BJ (cell line): ENCODE measurements at regions of chr3 and their contacts with region 1.

Region 1: DNA sequence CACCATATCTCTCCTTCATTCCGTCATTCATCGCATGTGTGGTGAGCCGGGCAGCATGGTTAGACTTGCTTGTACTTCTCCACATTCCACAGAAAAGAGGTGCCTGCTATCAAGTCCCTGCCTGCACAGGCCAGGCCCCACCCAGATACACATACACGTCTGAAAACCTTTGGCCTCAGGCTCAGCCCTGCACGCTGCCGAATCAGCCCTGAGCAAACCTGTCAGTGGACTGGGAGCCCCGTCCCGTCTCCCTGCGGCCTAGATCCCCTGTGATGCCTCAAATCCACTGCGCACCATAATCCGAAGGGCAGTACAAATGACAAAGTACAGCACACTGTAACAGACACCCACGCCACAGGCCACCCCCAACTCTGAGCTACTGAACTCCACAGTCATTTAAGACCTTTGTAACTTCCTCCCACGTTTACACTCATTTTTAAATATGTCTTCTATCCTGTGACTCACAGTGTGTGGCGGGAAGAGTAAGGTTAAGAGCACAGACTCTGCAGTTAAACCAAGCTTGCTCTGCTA is 67.1 kb downstream of the MB21D2 start:
- DNase-seq: no peak
- H3K4me3 ChIP-seq: no peak overlapping the region
- H3K27me3 ChIP-seq: no peaks in the 10 kb centered on the region
- CTCF ChIP-seq: no peak

Region 2: GRCh38 chr3:192917404-192918274 is 67.1 kb after region 1 on chr3 and contains the start of gene MB21D2:
- CTCF ChIA-PET with region 1: no interaction called
- POLR2A ChIA-PET with region 1: interaction called, 15 read pairs
- DNase-seq: no peak
- H3K4me3 ChIP-seq: peak within 1 kb of the TSS; percentile 79
- H3K27me3 ChIP-seq: no peaks in the 10 kb centered on the region
- CTCF ChIP-seq: no peak
- polyA plus RNA-seq, gene MB21D2: 12.3 and 13.3 TPM in 2 replicates